ENCODE measurements at regions of chr12 and their contacts with region 1.

Region 1: GRCh38 chr12:51923501-51924271 is 16.4 kb downstream of the ACVRL1 start:
- DNase-seq: peak; percentile 72
- CTCF ChIP-seq: peak; percentile 91

Region 2: GRCh38 chr12:51911788-51912711 is 11.6 kb before region 1 on chr12:
- CTCF ChIA-PET with region 1: interaction called, 42 read pairs
- POLR2A ChIA-PET with region 1: no interaction called
- DNase-seq: no peak
- CTCF ChIP-seq: no peak

Region 3: GRCh38 chr12:51938726-51939125 is 15.0 kb after region 1 on chr12:
- CTCF ChIA-PET with region 1: interaction called, 20 read pairs
- POLR2A ChIA-PET with region 1: no interaction called
- DNase-seq: no peak
- CTCF ChIP-seq: no peak

Region 4: GRCh38 chr12:51980051-51980808 is 56.5 kb after region 1 on chr12:
- CTCF ChIA-PET with region 1: interaction called, 10 read pairs
- POLR2A ChIA-PET with region 1: no interaction called
- DNase-seq: peak; percentile 86
- CTCF ChIP-seq: peak; percentile 96

Measured in GM10248 (cell line).